H1 (cell line): ENCODE measurements at regions of chr3 and their contacts with region 1.

Region 1: DNA sequence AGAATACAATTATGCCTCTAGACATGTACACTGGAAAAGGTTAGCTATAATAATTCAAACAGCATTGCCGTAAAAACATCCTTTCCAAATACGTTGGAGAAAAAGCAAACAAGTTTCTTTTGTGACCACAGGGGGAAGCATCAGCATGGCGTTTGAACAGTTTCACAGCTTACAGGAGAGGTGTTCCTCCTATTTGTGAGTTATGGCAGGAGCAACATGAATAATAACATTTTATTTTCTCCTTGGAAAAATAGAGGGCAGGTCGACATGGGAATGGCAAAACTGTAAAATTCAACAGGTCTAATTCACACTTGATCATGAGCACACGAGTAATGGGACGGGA is 39.7 kb upstream of the GADL1 start:
- DNase-seq: peak in 1 of 2 experiments; percentile 5
- H3K4me3 ChIP-seq: no peak overlapping the region
- H3K27ac ChIP-seq: no peak overlapping the region
- H3K4me1 ChIP-seq: no peaks in the 10 kb centered on the region
- H3K27me3 ChIP-seq: no peaks in the 10 kb centered on the region
- CTCF ChIP-seq: peak in 2 of 3 experiments; percentile 34 to 63; a peak in 2 of 4 replicates
- EP300 ChIP-seq: no peak
- POLR2A ChIP-seq: no peak
- RAD21 ChIP-seq: peak; percentile 73 to 76

Region 2: DNA sequence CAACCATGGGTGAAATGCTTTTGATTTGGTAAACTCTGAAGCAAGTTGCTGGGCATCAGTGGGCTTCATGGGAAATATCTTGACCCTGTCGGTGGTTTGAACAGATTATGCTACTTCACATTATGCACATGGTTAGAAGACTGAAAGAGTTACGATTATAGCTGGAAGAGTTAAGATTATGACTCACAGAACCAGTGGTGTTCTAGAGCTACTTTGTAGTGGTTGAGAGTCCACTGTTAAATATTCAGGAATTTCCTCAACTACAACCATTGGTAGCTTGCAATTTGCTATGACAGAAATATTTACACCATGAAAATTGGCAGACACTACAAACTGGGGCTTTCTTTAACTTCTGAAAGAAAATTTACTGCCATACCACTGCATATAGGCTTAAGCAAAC is 139.0 kb before region 1 on chr3:
- CTCF ChIA-PET with region 1: no interaction called
- POLR2A ChIA-PET with region 1: no interaction called
- DNase-seq: no peak
- H3K4me3 ChIP-seq: no peak overlapping the region
- H3K27ac ChIP-seq: no peak overlapping the region
- H3K4me1 ChIP-seq: no peaks in the 10 kb centered on the region
- H3K27me3 ChIP-seq: no peaks in the 10 kb centered on the region
- CTCF ChIP-seq: no peak
- EP300 ChIP-seq: no peak
- POLR2A ChIP-seq: no peak
- RAD21 ChIP-seq: no peak

Region 3: DNA sequence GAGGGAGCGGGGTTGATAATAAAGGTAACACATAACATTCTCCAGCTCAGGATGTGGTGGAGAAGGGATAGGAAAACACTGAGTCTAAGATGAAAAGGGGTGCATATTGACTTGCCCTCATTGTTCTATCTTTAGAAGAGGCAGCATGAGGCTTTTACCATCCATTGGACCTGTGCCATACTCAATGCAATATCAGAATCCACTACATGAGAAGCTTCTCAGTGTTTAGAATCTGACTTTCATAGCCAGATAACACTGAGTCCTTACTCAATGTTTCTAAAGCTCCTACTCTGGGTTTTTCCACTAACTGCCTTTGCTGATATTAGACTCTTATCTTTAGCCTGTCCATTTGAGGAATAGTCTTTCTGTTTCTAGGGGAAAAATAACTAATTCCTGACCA is 15.4 kb before region 1 on chr3:
- CTCF ChIA-PET with region 1: interaction called, 10 read pairs
- POLR2A ChIA-PET with region 1: no interaction called
- DNase-seq: no peak
- H3K4me3 ChIP-seq: no peak overlapping the region
- H3K27ac ChIP-seq: no peak overlapping the region
- H3K4me1 ChIP-seq: no peaks in the 10 kb centered on the region
- H3K27me3 ChIP-seq: no peaks in the 10 kb centered on the region
- CTCF ChIP-seq: no peak
- EP300 ChIP-seq: no peak
- POLR2A ChIP-seq: no peak
- RAD21 ChIP-seq: no peak

Region 4: GRCh38 chr3:30977592-30977991 is 43.4 kb after region 1 on chr3:
- CTCF ChIA-PET with region 1: no interaction called
- POLR2A ChIA-PET with region 1: no interaction called
- DNase-seq: no peak
- H3K4me3 ChIP-seq: no peak overlapping the region
- H3K27ac ChIP-seq: no peak overlapping the region
- H3K4me1 ChIP-seq: no peaks in the 10 kb centered on the region; a peak in 2 of 7 replicates
- H3K27me3 ChIP-seq: no peaks in the 10 kb centered on the region
- CTCF ChIP-seq: no peak
- EP300 ChIP-seq: no peak
- POLR2A ChIP-seq: no peak
- RAD21 ChIP-seq: no peak

Region 5: DNA sequence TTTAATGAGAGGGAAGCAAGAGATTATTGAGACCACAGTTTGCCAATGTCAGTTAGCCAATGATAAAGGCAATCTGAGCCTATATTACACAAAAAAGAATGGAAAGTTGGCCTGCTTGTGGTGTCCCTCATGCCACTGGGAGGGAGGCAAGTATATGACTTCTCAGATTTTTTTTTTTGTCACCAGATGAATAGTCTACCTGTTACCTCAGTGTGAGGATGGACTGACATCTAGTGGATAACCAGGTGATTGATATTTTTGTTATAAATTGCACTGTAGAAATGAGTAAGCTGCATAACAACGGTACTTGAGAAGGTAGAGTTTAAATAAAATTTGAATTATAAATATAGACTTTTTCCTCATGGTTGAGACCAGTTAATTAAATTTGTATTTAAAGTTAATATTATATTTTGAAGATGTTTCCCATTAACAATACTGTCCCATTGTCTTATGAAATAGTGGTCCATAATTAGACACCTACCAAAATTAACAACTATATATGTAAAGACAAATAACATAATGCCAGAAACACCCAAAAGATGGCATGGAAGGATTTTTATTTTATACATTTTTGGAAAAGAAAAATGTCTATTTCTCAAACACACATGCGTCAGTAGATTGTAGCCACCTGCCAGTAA is 198.1 kb after region 1 on chr3:
- CTCF ChIA-PET with region 1: interaction called, 10 read pairs
- POLR2A ChIA-PET with region 1: no interaction called
- DNase-seq: no peak
- H3K4me3 ChIP-seq: no peak overlapping the region
- H3K27ac ChIP-seq: no peak overlapping the region
- H3K4me1 ChIP-seq: peaks cover 0 to 2% (median 0%) of the 10 kb centered on the region in 4 experiments; a peak in 1 of 7 replicates
- H3K27me3 ChIP-seq: no peaks in the 10 kb centered on the region
- CTCF ChIP-seq: peak in 2 of 3 experiments; percentile 49 to 50; a peak in 2 of 4 replicates
- EP300 ChIP-seq: no peak
- POLR2A ChIP-seq: no peak
- RAD21 ChIP-seq: peak; percentile 92 to 95